B cell (primary cell): ENCODE measurements at regions of chr4 and their contacts with region 1.

Region 1: GRCh38 chr4:16196478-16197393 is 29.5 kb downstream of the TAPT1 start:
- DNase-seq: peak; percentile 73
- ATAC-seq: peak; percentile 83
- H3K4me3 ChIP-seq: peak overlapping the region in 2 of 5 experiments; percentile 16 to 34
- H3K4me3 Mint-ChIP-seq: peak overlapping the region; percentile 40
- H3K27ac ChIP-seq: peak overlapping the region; percentile 40 to 62
- H3K27ac Mint-ChIP-seq: peak overlapping the region; percentile 32
- H3K4me1 ChIP-seq: peaks cover 12 to 19% of the 10 kb centered on the region in 2 donors
- H3K4me1 Mint-ChIP-seq: peaks cover 30% of the 10 kb centered on the region
- H3K27me3 ChIP-seq: no peaks in the 10 kb centered on the region
- H3K27me3 Mint-ChIP-seq: no peaks in the 10 kb centered on the region
- CTCF ChIP-seq: no peak

Region 2: GRCh38 chr4:16026160-16026761 is 170.5 kb before region 1 on chr4:
- CTCF ChIA-PET with region 1: interaction called, 3 read pairs
- POLR2A ChIA-PET with region 1: no interaction called
- intact Hi-C with region 1: loop called (anchors 2 kb)
- DNase-seq: peak; percentile 75
- ATAC-seq: peak; percentile 49
- H3K4me3 ChIP-seq: no peak overlapping the region
- H3K4me3 Mint-ChIP-seq: no peak overlapping the region
- H3K27ac ChIP-seq: no peak overlapping the region
- H3K27ac Mint-ChIP-seq: no peak overlapping the region
- H3K4me1 ChIP-seq: peaks cover 0 to under 1% of the 10 kb centered on the region in 2 donors
- H3K4me1 Mint-ChIP-seq: no peaks in the 10 kb centered on the region
- H3K27me3 ChIP-seq: peaks cover 0 to 6% (median 1%) of the 10 kb centered on the region in 4 experiments
- H3K27me3 Mint-ChIP-seq: peaks cover 21% of the 10 kb centered on the region
- CTCF ChIP-seq: peak; percentile 90

Region 3: DNA sequence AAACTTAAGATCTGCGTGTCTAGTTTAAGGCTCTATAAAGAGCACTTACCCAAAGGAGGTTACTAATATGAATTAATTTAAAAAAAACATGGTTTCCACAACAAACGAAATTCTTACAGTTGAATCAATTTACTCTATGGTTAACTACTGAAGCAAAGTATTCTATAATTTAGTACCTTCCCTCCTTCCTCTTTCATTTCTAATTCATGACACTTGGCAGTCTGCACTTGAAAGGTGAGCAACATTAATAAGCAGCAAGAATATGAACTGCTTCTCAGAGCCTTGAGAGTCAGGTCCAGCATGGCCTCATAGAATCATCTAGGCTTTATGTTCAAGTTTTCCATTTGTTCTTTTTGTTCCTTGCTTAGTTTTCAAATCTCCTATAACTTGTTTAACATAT is 13.1 kb before region 1 on chr4:
- CTCF ChIA-PET with region 1: interaction called, 13 read pairs
- POLR2A ChIA-PET with region 1: no interaction called
- intact Hi-C with region 1: no loop called
- DNase-seq: no peak
- ATAC-seq: no peak
- H3K4me3 ChIP-seq: no peak overlapping the region
- H3K4me3 Mint-ChIP-seq: no peak overlapping the region
- H3K27ac ChIP-seq: peak overlapping the region in 1 of 2 donors; percentile 37
- H3K27ac Mint-ChIP-seq: no peak overlapping the region
- H3K4me1 ChIP-seq: peaks cover 0 to 12% of the 10 kb centered on the region in 2 donors
- H3K4me1 Mint-ChIP-seq: peaks cover 12% of the 10 kb centered on the region
- H3K27me3 ChIP-seq: no peaks in the 10 kb centered on the region
- H3K27me3 Mint-ChIP-seq: no peaks in the 10 kb centered on the region
- CTCF ChIP-seq: no peak

Region 4: DNA sequence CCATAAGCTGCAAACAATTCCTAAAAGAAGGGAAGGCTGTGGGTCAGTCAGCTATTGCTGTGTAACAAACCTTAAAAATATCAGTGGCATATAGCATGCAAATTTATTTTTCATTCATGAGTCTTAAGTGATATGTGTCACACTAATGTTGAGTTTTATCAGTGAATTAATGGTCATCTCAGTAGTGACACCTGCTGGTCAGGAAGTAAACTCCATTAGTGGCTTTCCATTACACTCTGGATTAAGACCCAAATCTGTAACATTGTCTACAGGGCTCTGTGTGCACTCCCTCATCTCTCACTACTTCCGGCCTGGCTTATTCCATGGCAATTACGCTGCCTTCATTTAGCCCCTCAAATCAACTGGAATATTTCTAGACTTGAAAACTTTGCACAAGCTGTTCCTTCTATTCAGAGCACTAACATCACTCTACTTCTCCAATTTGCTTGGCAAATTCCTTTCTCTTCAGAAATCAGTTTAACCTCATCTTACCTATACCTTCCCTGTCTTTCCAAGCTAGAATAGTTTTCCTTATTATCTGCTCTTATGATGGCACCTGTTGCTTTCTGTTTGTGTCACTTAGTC is 246.9 kb after region 1 on chr4:
- CTCF ChIA-PET with region 1: no interaction called
- POLR2A ChIA-PET with region 1: no interaction called
- intact Hi-C with region 1: loop called (anchors 5 kb)
- DNase-seq: peak; percentile 48
- ATAC-seq: no peak
- H3K4me3 ChIP-seq: no peak overlapping the region
- H3K4me3 Mint-ChIP-seq: no peak overlapping the region
- H3K27ac ChIP-seq: no peak overlapping the region
- H3K27ac Mint-ChIP-seq: no peak overlapping the region
- H3K4me1 ChIP-seq: no peaks in the 10 kb centered on the region
- H3K4me1 Mint-ChIP-seq: no peaks in the 10 kb centered on the region
- H3K27me3 ChIP-seq: no peaks in the 10 kb centered on the region
- H3K27me3 Mint-ChIP-seq: no peaks in the 10 kb centered on the region
- CTCF ChIP-seq: peak; percentile 72

Region 5: GRCh38 chr4:16686195-16686594 is 489.5 kb after region 1 on chr4:
- CTCF ChIA-PET with region 1: no interaction called
- POLR2A ChIA-PET with region 1: no interaction called
- intact Hi-C with region 1: no loop called
- DNase-seq: no peak
- ATAC-seq: no peak
- H3K4me3 ChIP-seq: no peak overlapping the region
- H3K4me3 Mint-ChIP-seq: no peak overlapping the region
- H3K27ac ChIP-seq: no peak overlapping the region
- H3K27ac Mint-ChIP-seq: no peak overlapping the region
- H3K4me1 ChIP-seq: no peaks in the 10 kb centered on the region
- H3K4me1 Mint-ChIP-seq: no peaks in the 10 kb centered on the region
- H3K27me3 ChIP-seq: no peaks in the 10 kb centered on the region
- H3K27me3 Mint-ChIP-seq: no peaks in the 10 kb centered on the region
- CTCF ChIP-seq: no peak